ENCODE measurements at regions of chr16 and their contacts with region 1.

Region 1: DNA sequence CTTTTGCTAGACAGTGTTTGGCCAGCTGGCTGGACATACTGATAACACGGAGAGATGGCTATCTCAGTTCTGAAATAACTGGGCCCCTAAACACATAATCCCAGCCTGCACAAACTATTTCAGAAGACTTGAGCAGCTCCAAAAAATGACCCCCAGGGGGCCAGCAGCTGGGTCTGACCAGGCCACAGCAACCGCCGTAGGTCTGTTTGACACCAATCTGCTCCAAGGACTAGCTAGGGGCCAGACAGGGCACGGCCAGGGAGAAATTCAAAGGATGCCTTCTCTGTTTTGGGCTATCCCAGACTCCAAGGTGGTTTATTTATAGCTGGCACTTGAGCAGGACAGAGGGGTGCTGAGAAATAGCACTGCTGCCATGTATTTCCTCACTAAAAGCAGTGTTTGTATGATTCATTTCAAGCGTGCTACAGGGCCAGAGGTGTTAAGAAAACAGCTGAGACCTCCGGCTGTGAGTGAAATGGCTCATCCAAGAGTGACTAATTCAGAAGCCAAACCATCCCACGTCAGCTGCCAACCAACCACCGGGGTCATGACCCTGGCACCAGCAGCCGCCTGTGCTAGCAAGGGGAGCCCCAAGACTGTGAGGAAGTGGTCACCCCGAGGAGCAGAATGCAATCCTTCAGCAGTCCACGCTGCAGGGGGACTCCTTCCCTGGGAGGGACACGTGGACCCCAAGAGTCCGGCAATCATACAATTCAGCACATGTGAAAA is 5.7 kb downstream of the GGA2 start:
- DNase-seq: peak; percentile 95 to 98 (median 97)
- H3K4me3 ChIP-seq: peak overlapping the region in 1 of 3 experiments; percentile 8
- H3K4me3 Mint-ChIP-seq: peak overlapping the region; percentile 70 to 72
- H3K27ac ChIP-seq: peak overlapping the region; percentile 89 to 91
- H3K27ac Mint-ChIP-seq: peak overlapping the region; percentile 88 to 99 (median 96)
- H3K4me1 ChIP-seq: peaks cover 89 to 94% of the 10 kb centered on the region in 2 donors
- H3K4me1 Mint-ChIP-seq: peaks cover 84% of the 10 kb centered on the region
- H3K27me3 ChIP-seq: no peaks in the 10 kb centered on the region
- H3K27me3 Mint-ChIP-seq: peaks cover 0 to 2% (median 0%) of the 10 kb centered on the region in 3 donors
- CTCF ChIP-seq: peak; percentile 30

Region 2: DNA sequence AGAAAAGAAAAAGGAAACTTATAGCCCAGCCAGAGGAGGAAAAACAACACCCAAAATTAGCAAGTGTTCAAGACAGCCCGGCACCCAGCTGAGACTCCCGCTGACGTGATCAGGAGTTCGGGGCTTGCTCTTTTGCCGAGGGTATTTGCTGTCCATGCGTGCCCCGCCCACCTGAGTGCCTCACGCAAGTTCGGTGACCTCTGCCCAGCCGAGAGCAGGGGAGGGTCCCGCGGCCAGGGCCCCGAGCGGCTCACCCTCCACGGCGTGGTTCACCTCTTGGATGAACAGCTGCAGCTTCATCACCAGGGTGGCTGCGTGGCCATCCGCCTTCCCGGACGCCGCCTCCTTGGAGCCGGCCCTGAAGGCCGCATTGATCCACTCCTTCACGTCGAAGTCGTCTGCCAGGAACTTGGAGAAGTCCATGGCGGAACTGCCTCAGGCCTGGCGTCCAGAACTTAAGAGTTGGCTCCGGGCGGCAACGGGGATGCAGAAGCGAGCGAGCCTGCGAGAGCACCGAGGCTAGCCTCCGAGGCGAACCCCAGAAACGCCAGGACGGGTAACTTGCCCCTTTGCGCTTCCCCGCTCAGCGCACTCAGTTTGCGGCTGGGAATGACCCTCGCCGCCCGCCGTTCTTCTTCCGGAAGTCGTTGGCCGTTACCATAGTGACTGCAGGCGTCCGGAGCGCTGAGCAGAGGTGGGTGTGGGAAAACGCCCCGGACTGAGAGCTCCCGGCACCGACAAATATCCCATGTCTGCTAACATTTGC is 51.9 kb before region 1 on chr16 and contains the start of gene COG7:
- intact Hi-C with region 1: loop called in 1 of 2 experiments (anchors 10 kb)
- DNase-seq: peak; percentile 64 to 77 (median 70)
- H3K4me3 ChIP-seq: peak within 1 kb of the TSS; percentile 68 to 98 (median 97)
- H3K4me3 Mint-ChIP-seq: peak within 1 kb of the TSS; percentile 91 to 95
- H3K27ac ChIP-seq: peak within 1 kb of the TSS; percentile 32 to 78
- H3K27ac Mint-ChIP-seq: peak within 1 kb of the TSS; percentile 76 to 93 (median 88)
- H3K4me1 ChIP-seq: peaks cover 11 to 15% of the 10 kb centered on the region in 2 donors
- H3K4me1 Mint-ChIP-seq: peaks cover 24% of the 10 kb centered on the region
- H3K27me3 ChIP-seq: no peaks in the 10 kb centered on the region
- H3K27me3 Mint-ChIP-seq: peaks cover 0 to 4% (median 0%) of the 10 kb centered on the region in 3 donors
- CTCF ChIP-seq: no peak
- polyA plus RNA-seq, gene COG7: 6.6 to 28.8 (median 8.0) TPM